ENCODE measurements at regions of chr10 and their contacts with region 1.

Region 1: GRCh38 chr10:69885379-69886013 is 83.8 kb downstream of the COL13A1 start:
- DNase-seq: no peak
- H3K4me3 ChIP-seq: no peak overlapping the region
- H3K27ac ChIP-seq: no peak overlapping the region
- H3K27me3 ChIP-seq: no peaks in the 10 kb centered on the region
- CTCF ChIP-seq: peak; percentile 54

Region 2: GRCh38 chr10:69703766-69704638 is 181.5 kb before region 1 on chr10:
- CTCF ChIA-PET with region 1: no interaction called
- POLR2A ChIA-PET with region 1: no interaction called
- DNase-seq: peak; percentile 88
- H3K4me3 ChIP-seq: no peak overlapping the region
- H3K27ac ChIP-seq: peak overlapping the region; percentile 85
- H3K27me3 ChIP-seq: peaks cover 26% of the 10 kb centered on the region
- CTCF ChIP-seq: no peak

Region 3: DNA sequence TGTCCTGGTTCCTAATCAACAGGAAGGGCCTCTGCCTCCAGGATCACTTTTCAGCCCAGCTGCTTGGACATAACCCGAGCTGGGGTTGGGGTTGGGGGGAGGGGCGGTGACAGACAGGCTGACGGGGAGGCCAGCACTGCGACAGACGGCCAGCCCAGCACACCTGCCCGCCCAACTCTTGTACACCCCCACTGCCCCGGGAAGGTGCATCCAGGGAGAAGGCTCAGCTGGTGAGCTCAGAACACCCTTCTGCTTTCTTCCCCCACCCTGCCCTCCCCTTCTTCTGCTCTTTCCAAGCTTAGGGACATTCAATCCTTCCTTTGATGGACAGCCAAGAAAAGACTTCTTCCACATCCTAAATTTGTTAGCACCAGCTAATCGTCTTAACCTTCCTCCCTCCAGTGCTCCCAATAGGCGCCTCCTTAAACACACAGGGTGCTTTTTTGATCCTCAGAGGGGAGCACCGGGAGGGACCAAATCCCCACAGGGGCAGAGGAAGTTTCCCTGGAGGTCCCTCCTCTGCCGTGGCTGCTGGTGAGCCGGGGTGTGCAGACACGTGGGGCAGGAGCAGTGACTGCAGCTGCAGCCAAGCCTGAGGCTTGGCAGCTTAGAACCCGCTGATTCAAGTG is 39.1 kb before region 1 on chr10:
- CTCF ChIA-PET with region 1: no interaction called
- POLR2A ChIA-PET with region 1: no interaction called
- DNase-seq: no peak
- H3K4me3 ChIP-seq: no peak overlapping the region
- H3K27ac ChIP-seq: no peak overlapping the region
- H3K27me3 ChIP-seq: no peaks in the 10 kb centered on the region
- CTCF ChIP-seq: no peak

Region 4: GRCh38 chr10:69901628-69902505 is 16.4 kb after region 1 on chr10:
- CTCF ChIA-PET with region 1: interaction called, 10 read pairs
- POLR2A ChIA-PET with region 1: no interaction called
- DNase-seq: peak; percentile 11
- H3K4me3 ChIP-seq: no peak overlapping the region
- H3K27ac ChIP-seq: no peak overlapping the region
- H3K27me3 ChIP-seq: no peaks in the 10 kb centered on the region
- CTCF ChIP-seq: peak; percentile 74

Region 5: GRCh38 chr10:69938541-69938991 is 53.1 kb after region 1 on chr10:
- CTCF ChIA-PET with region 1: no interaction called
- POLR2A ChIA-PET with region 1: no interaction called
- DNase-seq: no peak
- H3K4me3 ChIP-seq: no peak overlapping the region
- H3K27ac ChIP-seq: no peak overlapping the region
- H3K27me3 ChIP-seq: no peaks in the 10 kb centered on the region
- CTCF ChIP-seq: no peak

Region 6: GRCh38 chr10:70404036-70404786 is 518.7 kb after region 1 on chr10 and contains the start of gene EIF4EBP2:
- CTCF ChIA-PET with region 1: no interaction called
- POLR2A ChIA-PET with region 1: no interaction called
- DNase-seq: peak; percentile 84
- H3K4me3 ChIP-seq: peak within 1 kb of the TSS; percentile 91
- H3K27ac ChIP-seq: peak within 1 kb of the TSS; percentile 82
- H3K27me3 ChIP-seq: no peaks in the 10 kb centered on the region
- CTCF ChIP-seq: no peak
- polyA plus RNA-seq, gene EIF4EBP2: 27.3 and 31.2 TPM in 2 replicates